Activated T-helper 1 cell treated with anti-CD3 and anti-CD28 coated beads, Interleukin-12 subunit alpha, Interleukin-12 subunit beta, Interleukin-2, Interleukin-4 antibody, amounts not matched to agents 30 ng/mL and 10 ng/mL and 1 ng/mL, durations not matched to agents 14 hours and 24 hours and 36 hours (primary cell): ENCODE measurements at regions of chr11 and their contacts with region 1.

Region 1: GRCh38 chr11:119323538-119324033 is 6.7 kb upstream of the MCAM start:
- DNase-seq: peak; percentile 64
- H3K4me3 Mint-ChIP-seq: no peak overlapping the region
- H3K27ac Mint-ChIP-seq: no peak overlapping the region
- H3K4me1 Mint-ChIP-seq: peaks cover 27% of the 10 kb centered on the region
- H3K27me3 Mint-ChIP-seq: peaks cover 13% of the 10 kb centered on the region

Region 2: GRCh38 chr11:119144825-119145486 is 178.6 kb before region 1 on chr11:
- intact Hi-C with region 1: loop called (anchors 1 kb)
- DNase-seq: no peak
- H3K4me3 Mint-ChIP-seq: no peak overlapping the region
- H3K27ac Mint-ChIP-seq: no peak overlapping the region
- H3K4me1 Mint-ChIP-seq: peaks cover 13% of the 10 kb centered on the region
- H3K27me3 Mint-ChIP-seq: peaks cover 38% of the 10 kb centered on the region

Region 3: GRCh38 chr11:119196833-119197483 is 126.6 kb before region 1 on chr11:
- intact Hi-C with region 1: loop called (anchors 1 kb)
- DNase-seq: peak; percentile 60
- H3K4me3 Mint-ChIP-seq: no peak overlapping the region
- H3K27ac Mint-ChIP-seq: no peak overlapping the region
- H3K4me1 Mint-ChIP-seq: peaks cover 9% of the 10 kb centered on the region
- H3K27me3 Mint-ChIP-seq: peaks cover 3% of the 10 kb centered on the region

Region 4: DNA sequence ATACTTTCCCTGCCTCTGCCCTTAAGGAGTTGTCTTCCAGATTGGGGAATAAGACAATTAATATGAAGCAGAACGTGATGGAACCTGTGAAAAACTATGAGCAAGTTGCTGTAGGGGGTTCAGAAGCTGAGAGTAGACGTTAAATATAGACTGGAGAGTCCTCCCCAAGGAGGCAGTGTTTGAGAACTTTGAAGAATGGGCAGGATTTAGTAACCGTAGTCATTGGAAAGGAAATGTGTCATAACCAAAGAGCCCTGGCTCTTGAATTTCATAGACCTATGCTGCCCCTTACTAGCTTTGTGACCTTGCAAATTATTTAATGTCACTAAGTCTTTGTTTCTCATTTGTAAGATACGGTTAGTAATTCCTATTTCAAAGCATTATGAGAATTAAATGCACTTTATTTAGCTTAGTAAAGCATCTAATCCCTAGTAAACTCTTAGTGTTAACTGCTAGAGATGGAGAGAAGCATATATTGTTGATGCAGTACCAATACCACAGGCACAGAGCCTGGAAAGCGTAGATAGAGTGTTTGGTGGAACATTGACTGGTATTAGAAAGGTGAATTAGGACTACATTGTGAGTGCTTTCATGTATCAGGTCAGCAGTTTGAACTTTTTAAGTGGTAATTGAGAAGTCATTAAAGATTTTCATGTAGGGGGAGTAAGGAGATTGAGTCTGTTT is 60.8 kb before region 1 on chr11:
- intact Hi-C with region 1: loop called (anchors 1 kb)
- DNase-seq: no peak
- H3K4me3 Mint-ChIP-seq: no peak overlapping the region
- H3K27ac Mint-ChIP-seq: no peak overlapping the region
- H3K4me1 Mint-ChIP-seq: peaks cover 46% of the 10 kb centered on the region
- H3K27me3 Mint-ChIP-seq: no peaks in the 10 kb centered on the region

Region 5: DNA sequence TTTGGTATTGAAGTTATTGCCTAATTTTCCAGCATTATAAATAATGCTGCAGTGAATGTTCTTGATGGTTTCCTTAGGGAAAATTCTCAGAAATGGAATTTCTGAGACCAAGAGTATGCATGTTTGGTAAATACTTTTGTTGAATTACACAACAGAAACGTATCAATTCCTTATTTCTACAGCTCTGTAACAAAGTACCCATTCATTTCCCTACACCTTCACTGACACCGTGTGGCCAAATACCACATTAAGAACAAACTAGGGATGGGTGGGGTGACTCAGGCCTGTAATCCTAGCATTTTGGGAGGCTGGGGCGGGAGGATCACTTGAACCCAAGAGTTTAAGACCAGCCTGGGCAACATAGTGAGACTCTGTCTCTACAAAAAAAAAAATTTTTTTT is 28.4 kb before region 1 on chr11:
- intact Hi-C with region 1: no loop called
- DNase-seq: no peak
- H3K4me3 Mint-ChIP-seq: no peak overlapping the region
- H3K27ac Mint-ChIP-seq: no peak overlapping the region
- H3K4me1 Mint-ChIP-seq: no peaks in the 10 kb centered on the region
- H3K27me3 Mint-ChIP-seq: no peaks in the 10 kb centered on the region

Region 6: DNA sequence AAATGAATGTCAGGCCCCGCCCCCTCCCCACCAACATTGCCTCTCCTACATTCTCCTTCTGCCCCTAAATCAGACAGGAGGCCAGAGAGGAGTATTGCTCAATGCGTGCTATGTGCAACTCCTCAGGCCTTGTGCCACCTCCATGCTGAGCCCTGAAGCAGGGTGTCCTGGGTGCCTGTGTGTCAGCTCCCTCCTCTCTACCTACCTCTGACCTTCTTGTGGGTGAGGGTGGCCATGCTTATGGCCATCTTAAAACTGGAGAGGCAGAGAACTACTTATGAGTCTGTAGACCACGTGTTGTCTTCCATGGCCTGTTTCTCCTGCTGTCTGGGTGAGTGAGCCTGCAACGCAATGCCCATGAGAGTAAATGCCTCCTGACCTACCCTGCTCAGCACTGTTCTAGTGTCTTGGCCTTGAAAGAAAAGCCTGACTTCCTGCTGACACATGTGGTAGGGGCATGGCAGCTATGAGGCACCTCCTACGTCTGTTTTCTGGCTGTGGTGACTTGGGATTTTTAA is 17.2 kb before region 1 on chr11:
- intact Hi-C with region 1: loop called (anchors 1 kb)
- DNase-seq: peak; percentile 15
- H3K4me3 Mint-ChIP-seq: peak overlapping the region; percentile 48
- H3K27ac Mint-ChIP-seq: peak overlapping the region; percentile 95
- H3K4me1 Mint-ChIP-seq: peaks cover 30% of the 10 kb centered on the region
- H3K27me3 Mint-ChIP-seq: no peaks in the 10 kb centered on the region